Activated B cell treated with CpG ODN at 0.5 μM for 24 hours (primary cell): ENCODE measurements at regions of chr21 and their contacts with region 1.

Region 1: GRCh38 chr21:36934864-36935420 is 31.5 kb downstream of the HLCS start:
- DNase-seq: no peak
- ATAC-seq: no peak
- H3K4me3 Mint-ChIP-seq: no peak overlapping the region
- H3K27ac Mint-ChIP-seq: no peak overlapping the region
- H3K4me1 Mint-ChIP-seq: no peaks in the 10 kb centered on the region
- H3K27me3 Mint-ChIP-seq: no peaks in the 10 kb centered on the region
- CTCF ChIP-seq: no peak

Region 2: DNA sequence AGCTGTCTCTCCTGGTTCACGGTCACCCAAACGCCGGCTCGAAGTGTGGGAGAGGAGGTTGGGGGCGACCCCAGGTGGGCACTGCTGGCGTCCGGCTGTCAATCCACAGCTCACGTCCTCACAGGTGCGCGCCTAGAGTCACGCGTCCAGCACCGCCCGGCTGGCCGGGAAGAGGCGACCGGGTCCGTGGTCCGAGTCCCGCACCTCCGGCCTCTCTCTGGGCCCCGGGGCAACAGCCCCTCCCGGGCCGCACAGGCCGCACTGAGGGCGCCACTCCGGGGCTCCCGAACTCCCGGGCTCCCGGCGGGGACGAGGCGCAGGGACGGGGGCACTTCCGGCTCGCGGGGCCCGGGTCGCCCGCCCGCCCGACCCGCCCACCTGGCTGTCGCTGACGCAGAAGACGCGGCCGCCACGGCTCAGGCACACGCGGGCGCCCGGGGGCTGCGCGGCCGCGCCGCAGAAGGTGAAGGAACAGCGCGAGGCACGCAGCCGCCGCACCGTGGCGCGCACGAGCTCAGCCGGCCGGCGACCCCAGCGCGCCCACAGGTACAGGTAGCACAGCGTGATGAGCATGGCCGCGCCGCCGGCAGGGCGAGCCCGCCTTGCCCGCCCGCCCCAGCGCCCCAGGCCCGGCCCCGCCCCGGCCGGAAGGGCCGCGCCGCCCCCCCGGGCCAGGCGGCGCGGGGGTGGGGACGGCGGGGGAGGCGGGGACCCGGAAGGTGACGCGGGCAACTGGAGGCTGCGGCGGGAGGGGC is 31.3 kb after region 1 on chr21 and contains the start of gene HLCS:
- CTCF ChIA-PET with region 1: interaction called, 4 read pairs
- POLR2A ChIA-PET with region 1: no interaction called
- intact Hi-C with region 1: loop called (anchors 2 kb)
- DNase-seq: peak; percentile 77
- ATAC-seq: peak; percentile 92
- H3K4me3 Mint-ChIP-seq: peak within 1 kb of the TSS; percentile 85
- H3K27ac Mint-ChIP-seq: peak within 1 kb of the TSS; percentile 80
- H3K4me1 Mint-ChIP-seq: peaks cover 20% of the 10 kb centered on the region
- H3K27me3 Mint-ChIP-seq: no peaks in the 10 kb centered on the region
- CTCF ChIP-seq: no peak
- total RNA-seq, gene HLCS: 8.1 and 10.6 TPM in 2 replicates

Region 3: GRCh38 chr21:36989699-36990507 is 55.0 kb after region 1 on chr21:
- CTCF ChIA-PET with region 1: interaction called, 4 read pairs
- POLR2A ChIA-PET with region 1: no interaction called
- intact Hi-C with region 1: loop called (anchors 1 kb)
- DNase-seq: peak; percentile 91
- ATAC-seq: peak; percentile 92
- H3K4me3 Mint-ChIP-seq: peak overlapping the region; percentile 83
- H3K27ac Mint-ChIP-seq: peak overlapping the region; percentile 80
- H3K4me1 Mint-ChIP-seq: peaks cover 10% of the 10 kb centered on the region
- H3K27me3 Mint-ChIP-seq: no peaks in the 10 kb centered on the region
- CTCF ChIP-seq: peak; percentile 27

Region 4: GRCh38 chr21:37009740-37010341 is 74.9 kb after region 1 on chr21:
- CTCF ChIA-PET with region 1: interaction called, 4 read pairs
- POLR2A ChIA-PET with region 1: interaction called, 3 read pairs
- intact Hi-C with region 1: loop called (anchors 1 kb)
- DNase-seq: peak; percentile 62
- ATAC-seq: peak; percentile 85
- H3K4me3 Mint-ChIP-seq: peak overlapping the region; percentile 39
- H3K27ac Mint-ChIP-seq: no peak overlapping the region
- H3K4me1 Mint-ChIP-seq: peaks cover 19% of the 10 kb centered on the region
- H3K27me3 Mint-ChIP-seq: peaks cover 46% of the 10 kb centered on the region
- CTCF ChIP-seq: no peak

Region 5: GRCh38 chr21:37267269-37268184 is 332.6 kb after region 1 on chr21 and contains the start of gene VPS26C:
- CTCF ChIA-PET with region 1: no interaction called
- POLR2A ChIA-PET with region 1: no interaction called
- intact Hi-C with region 1: no loop called
- DNase-seq: peak; percentile 94
- ATAC-seq: peak; percentile 86
- H3K4me3 Mint-ChIP-seq: peak within 1 kb of the TSS; percentile 96
- H3K27ac Mint-ChIP-seq: peak within 1 kb of the TSS; percentile 97
- H3K4me1 Mint-ChIP-seq: peaks cover 29% of the 10 kb centered on the region
- H3K27me3 Mint-ChIP-seq: peaks cover 6% of the 10 kb centered on the region
- CTCF ChIP-seq: no peak
- total RNA-seq, gene VPS26C: 42.5 and 45.2 TPM in 2 replicates